Thyroid gland (tissue), 4 donors: ENCODE measurements at regions of chr2 and their contacts with region 1.

Region 1: DNA sequence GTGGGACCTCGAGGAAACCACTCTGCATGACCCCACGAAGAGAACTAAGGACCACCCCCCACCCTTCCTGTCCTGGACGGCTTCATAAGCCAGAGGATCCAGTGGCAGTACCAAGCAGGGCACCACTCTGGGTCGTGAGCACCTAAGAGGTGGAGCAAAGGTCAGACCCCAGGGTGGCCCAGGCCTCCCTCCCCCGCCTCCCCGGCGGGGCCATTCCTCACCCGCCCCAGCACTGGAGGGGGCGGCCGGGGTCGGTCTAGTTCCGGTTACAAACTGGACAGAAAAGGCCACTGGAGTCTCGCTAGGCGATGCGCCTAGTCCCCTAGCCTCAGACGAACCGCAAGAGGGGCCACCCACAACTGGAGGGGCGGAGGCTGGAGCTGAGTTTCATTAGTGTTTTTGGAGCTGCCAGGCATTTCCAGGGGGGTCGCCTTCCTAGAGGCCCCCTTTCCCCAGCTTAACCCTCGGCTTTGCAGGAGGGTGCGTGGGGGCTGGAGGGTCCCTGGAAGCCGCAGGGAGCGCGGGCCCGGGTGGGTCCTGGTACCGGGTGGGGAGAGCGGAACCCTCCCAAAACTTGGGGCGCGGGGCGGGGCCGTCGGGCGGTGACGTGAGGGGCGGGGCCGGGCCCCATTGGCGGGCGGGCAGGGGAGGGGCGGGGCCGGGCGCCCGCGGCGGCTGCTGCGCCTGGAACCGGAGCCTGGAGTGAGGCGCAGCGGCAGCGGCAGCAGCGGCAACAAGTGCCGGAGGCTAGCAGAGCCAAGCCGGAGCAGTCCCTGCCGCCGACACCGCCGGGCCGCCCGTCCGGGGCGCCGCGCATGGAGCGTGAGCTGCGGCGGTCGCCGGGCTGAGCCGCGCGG is at the start of gene B3GNT2:
- DNase-seq: peak; percentile 83 to 84
- H3K4me3 ChIP-seq: peak within 1 kb of the TSS; percentile 87 to 94 (median 92)
- H3K27ac ChIP-seq: peak within 1 kb of the TSS; percentile 94 to 96 (median 96)
- H3K4me1 ChIP-seq: peaks cover 21 to 33% of the 10 kb centered on the region in 2 donors
- H3K27me3 ChIP-seq: no peaks in the 10 kb centered on the region
- CTCF ChIP-seq: no peak
- POLR2A ChIP-seq: peak; percentile 12 to 93
- total RNA-seq, gene B3GNT2: 18.9 to 37.1 (median 27.3) TPM

Region 2: DNA sequence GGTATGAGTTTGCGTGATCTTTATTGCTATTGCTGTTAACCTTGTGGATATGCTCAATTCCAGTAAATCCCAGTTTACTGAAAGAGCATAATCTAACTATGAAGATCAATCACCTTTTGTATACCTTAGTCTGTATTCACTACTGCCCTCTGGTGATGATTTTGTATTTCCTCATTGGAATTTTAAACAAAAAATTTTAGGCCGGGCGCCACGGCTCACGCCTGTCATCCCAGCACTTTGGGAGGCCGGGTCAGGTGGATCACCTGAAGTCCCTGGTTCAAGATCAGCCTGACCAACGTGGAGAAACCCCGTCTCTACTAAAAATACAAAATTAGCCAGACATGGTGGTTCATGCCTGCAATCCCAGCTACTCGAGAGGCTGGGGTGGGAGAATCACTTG is 285.0 kb before region 1 on chr2:
- intact Hi-C with region 1: loop called (anchors 10 kb)
- DNase-seq: no peak
- H3K4me3 ChIP-seq: no peak overlapping the region
- H3K27ac ChIP-seq: no peak overlapping the region
- H3K4me1 ChIP-seq: peaks cover 10 to 11% of the 10 kb centered on the region in 2 donors
- H3K27me3 ChIP-seq: no peaks in the 10 kb centered on the region
- CTCF ChIP-seq: peak in 1 of 6 experiments; percentile 19
- POLR2A ChIP-seq: no peak

Region 3: GRCh38 chr2:62014102-62014501 is 181.5 kb before region 1 on chr2:
- intact Hi-C with region 1: loop called (anchors 10 kb)
- DNase-seq: peak; percentile 91 to 93
- H3K4me3 ChIP-seq: no peak overlapping the region
- H3K27ac ChIP-seq: peak overlapping the region; percentile 0 to 67 (median 39)
- H3K4me1 ChIP-seq: peaks cover 19 to 28% of the 10 kb centered on the region in 2 donors
- H3K27me3 ChIP-seq: no peaks in the 10 kb centered on the region
- CTCF ChIP-seq: peak in 4 of 6 experiments; percentile 50 to 68 (median 55)
- POLR2A ChIP-seq: peak in 1 of 2 donors; percentile 8

Region 4: GRCh38 chr2:62293490-62294271 is 98.0 kb after region 1 on chr2:
- intact Hi-C with region 1: loop called (anchors 10 kb)
- DNase-seq: peak; percentile 99
- H3K4me3 ChIP-seq: no peak overlapping the region
- H3K27ac ChIP-seq: peak overlapping the region; percentile 90 to 98 (median 93)
- H3K4me1 ChIP-seq: peaks cover 23 to 35% of the 10 kb centered on the region in 2 donors
- H3K27me3 ChIP-seq: no peaks in the 10 kb centered on the region
- CTCF ChIP-seq: no peak
- POLR2A ChIP-seq: peak in 1 of 2 donors; percentile 37